ENCODE measurements at regions of chr6 and their contacts with region 1.

Region 1: GRCh38 chr6:31619805-31620585 is 520 bp upstream of the PRRC2A start:
- DNase-seq: peak; percentile 98
- H3K4me3 Mint-ChIP-seq: peak overlapping the region; percentile 79
- H3K27ac Mint-ChIP-seq: peak overlapping the region; percentile 98
- H3K4me1 Mint-ChIP-seq: peaks cover 43% of the 10 kb centered on the region
- H3K27me3 Mint-ChIP-seq: no peaks in the 10 kb centered on the region

Region 2: DNA sequence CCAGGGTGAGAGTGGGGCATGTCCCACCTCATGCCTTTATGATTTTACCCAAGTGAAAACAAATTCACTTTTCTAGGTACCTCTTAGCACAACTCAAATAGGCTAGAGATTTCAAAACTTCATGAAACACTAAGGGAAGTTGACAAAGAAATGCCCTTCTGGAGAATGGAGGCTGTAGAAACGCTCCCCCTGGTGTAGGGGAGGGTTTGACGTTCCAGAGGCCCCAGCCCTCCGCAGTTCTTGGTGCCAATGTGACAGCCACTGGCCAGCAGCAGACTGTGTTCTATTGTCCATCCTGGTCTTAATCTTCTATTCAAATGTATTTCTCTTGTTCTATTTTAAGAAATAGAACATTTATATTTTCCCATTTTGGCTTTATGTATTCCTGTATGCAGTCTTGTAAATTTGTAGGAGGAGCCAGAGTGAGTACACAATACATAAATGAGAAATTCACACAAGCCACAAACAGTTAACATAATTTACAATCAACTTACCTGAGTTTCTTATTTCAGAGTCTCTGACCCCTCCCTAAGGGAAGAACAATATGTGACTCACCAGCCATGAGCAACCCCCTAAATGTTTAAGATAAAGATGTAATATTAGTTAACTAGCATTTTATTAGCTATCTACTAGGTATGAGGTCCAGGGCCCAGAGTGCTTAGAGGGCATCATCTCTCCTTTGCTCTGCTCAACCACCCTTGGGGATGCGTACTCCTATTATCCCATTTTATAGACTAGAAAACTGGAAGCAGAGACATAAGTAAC is 645.3 kb before region 1 on chr6:
- intact Hi-C with region 1: no loop called
- DNase-seq: no peak
- H3K4me3 Mint-ChIP-seq: no peak overlapping the region
- H3K27ac Mint-ChIP-seq: no peak overlapping the region
- H3K4me1 Mint-ChIP-seq: no peaks in the 10 kb centered on the region
- H3K27me3 Mint-ChIP-seq: peaks cover 34% of the 10 kb centered on the region

Region 3: DNA sequence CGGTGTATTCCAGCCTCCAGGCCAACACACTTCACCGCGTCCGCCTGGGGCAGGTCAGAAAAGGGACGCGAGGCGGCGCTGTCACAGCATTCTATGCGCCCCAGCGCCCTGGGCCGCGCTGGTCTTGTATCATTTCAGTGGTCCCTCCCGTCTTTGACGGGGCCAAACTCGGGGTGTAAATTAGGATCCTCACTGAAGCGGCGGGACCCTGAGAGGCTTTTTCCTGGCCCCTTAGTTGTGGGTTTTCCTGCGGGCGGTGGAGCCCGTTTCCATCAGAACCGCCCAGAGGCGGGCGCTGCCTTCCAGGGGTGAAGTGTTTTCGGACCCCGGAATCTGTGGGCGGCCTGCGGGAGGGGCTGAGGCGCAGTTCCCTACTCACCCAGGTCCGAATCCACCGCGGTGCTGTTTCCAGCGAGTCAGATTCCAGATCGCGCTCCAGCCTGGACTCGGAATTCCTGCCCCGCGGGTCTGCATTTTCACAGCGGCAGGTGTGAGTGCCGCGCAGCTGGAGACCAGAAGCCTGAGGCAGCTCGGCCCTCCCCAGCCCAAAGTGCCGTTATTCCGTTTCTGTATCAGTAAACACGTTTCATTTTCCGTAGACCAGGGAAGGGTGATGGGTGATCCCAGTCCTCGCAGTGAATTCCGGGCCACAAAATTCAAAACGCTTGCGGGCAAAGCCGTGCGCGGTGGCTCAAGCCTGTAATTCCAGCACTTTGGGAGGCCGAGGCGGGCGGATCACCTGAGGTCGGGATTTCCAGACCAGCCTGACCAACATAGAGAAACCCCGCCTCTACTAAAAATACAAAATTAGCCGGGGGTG is 125.9 kb before region 1 on chr6:
- intact Hi-C with region 1: loop called (anchors 2 kb)
- DNase-seq: peak; percentile 69
- H3K4me3 Mint-ChIP-seq: peak overlapping the region; percentile 89
- H3K27ac Mint-ChIP-seq: peak overlapping the region; percentile 85
- H3K4me1 Mint-ChIP-seq: peaks cover 46% of the 10 kb centered on the region
- H3K27me3 Mint-ChIP-seq: no peaks in the 10 kb centered on the region

Region 4: DNA sequence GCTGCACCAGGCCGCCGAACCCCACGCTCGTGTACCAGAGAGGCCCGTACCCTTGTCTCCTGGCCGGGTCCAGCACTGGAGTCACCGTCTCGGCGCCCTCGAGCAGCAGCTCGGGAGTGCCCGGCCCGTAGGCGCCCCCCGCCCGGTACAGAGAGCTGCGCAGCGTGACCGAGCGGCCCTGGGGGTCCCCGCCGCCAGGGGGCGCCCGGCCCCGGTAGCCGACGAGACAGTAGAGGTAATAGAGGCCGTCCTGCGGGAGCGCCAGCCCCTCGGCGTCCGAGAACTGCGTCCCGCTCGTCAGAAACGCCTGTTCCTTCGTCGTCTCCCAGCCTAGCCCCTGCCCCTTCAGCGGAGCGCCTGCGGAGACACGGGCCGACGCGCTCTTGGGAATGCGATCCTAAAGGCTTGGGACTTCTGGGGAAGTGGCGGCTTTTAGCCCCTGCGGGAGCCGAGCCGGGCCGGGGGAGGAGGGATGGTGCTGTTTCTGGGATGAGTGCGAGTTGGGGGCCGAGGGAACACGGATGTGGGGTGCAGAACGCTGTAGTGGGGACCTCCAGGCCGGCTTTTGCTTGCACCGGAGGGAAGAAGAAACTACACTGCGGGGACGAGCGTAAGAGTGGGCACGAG is 39.1 kb before region 1 on chr6:
- intact Hi-C with region 1: loop called (anchors 1 kb)
- DNase-seq: peak; percentile 81
- H3K4me3 Mint-ChIP-seq: peak overlapping the region; percentile 92
- H3K27ac Mint-ChIP-seq: peak overlapping the region; percentile 93
- H3K4me1 Mint-ChIP-seq: peaks cover 63% of the 10 kb centered on the region
- H3K27me3 Mint-ChIP-seq: no peaks in the 10 kb centered on the region

Region 5: DNA sequence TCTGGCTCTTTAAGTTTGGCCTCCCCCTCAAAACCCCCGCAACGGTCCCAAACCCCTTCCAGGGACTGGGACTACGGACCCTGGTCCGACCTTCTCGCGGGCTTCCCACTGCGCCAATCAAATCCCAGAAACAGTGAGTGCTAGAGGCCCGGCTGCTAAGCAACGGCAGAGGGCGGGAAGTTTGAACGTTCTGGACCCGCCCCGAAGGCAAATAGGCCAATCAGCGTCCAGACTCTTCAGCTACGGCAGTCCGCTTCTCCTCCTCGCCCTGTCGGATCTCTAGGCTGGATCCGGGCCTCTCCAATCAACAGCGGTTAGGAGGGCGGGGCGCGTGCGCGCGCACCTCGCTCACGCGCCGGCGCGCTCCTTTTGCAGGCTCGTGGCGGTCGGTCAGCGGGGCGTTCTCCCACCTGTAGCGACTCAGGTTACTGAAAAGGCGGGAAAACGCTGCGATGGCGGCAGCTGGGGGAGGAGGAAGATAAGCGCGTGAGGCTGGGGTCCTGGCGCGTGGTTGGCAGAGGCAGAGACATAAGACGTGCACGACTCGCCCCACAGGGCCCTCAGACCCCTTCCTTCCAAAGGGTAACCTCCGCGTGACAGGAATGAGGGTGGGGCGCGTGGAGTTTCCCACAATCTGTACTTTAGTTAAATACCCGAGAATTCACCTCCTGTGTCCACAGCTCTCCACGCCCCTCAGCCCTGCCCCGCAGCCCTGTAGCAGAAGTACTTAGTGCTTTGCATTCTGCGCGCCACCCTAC is 119.8 kb after region 1 on chr6 and contains the start of gene MSH5:
- intact Hi-C with region 1: loop called (anchors 1 kb)
- DNase-seq: peak; percentile 97
- H3K4me3 Mint-ChIP-seq: peak within 1 kb of the TSS; percentile 98
- H3K27ac Mint-ChIP-seq: peak within 1 kb of the TSS; percentile 99
- H3K4me1 Mint-ChIP-seq: peaks cover 64% of the 10 kb centered on the region
- H3K27me3 Mint-ChIP-seq: peaks cover 3% of the 10 kb centered on the region
- total RNA-seq, gene MSH5: 80.5 and 83.4 TPM in 2 replicates

Region 6: GRCh38 chr6:31862344-31863227 is 242.6 kb after region 1 on chr6 and contains the start of gene NEU1:
- intact Hi-C with region 1: loop called (anchors 2 kb)
- DNase-seq: peak; percentile 99
- H3K4me3 Mint-ChIP-seq: peak within 1 kb of the TSS; percentile 97
- H3K27ac Mint-ChIP-seq: peak within 1 kb of the TSS; percentile 94
- H3K4me1 Mint-ChIP-seq: peaks cover 37% of the 10 kb centered on the region
- H3K27me3 Mint-ChIP-seq: peaks cover 3% of the 10 kb centered on the region
- total RNA-seq, gene NEU1: 22.1 and 24.3 TPM in 2 replicates

Region 7: DNA sequence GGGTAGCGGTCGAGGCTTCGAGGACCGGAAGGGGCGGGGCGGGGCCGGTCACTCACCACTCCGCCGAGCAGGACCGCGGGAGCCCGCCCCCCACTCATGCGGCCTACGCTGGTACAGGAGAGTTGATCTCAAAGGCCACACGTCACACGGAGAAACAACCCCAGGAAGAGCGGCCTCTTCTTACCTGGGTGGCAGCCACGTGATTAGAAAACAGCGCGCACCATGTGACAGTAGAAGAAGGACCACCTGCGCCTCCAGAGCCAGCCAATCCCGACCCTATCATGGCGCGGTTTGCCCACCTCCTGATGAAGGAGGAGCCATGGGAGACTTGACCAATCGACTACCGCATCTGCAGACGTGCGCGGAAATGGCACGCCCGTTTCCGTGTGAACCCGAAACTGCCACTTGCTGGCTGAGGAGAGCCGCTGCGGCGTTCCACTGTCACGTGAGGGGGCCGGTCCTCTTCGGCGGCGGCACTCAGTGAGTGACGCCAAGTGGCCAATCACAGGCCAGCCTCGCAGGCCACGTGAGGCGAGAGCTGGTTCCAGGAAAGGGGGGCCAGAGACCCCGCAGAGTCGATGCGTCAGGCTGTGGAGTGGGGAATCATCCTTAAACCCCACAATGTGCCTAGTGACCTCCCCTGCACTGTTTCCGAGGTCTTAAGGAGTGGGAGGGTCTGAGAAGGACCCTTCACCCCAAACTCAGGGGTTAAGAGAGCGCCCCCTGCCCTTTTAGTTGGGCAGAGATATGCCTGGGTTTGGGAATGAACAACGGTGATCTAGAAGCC is 1798.1 kb after region 1 on chr6 and contains the start of gene CUTA:
- intact Hi-C with region 1: loop called (anchors 2 kb)
- DNase-seq: peak; percentile 98
- H3K4me3 Mint-ChIP-seq: peak within 1 kb of the TSS; percentile 95
- H3K27ac Mint-ChIP-seq: peak within 1 kb of the TSS; percentile 96
- H3K4me1 Mint-ChIP-seq: peaks cover 70% of the 10 kb centered on the region
- H3K27me3 Mint-ChIP-seq: no peaks in the 10 kb centered on the region
- total RNA-seq, gene CUTA: 131 and 137 TPM in 2 replicates

Measured in activated T-helper 1 cell treated with anti-CD3 and anti-CD28 coated beads, Interleukin-12 subunit alpha, Interleukin-12 subunit beta, Interleukin-2, Interleukin-4 antibody, amounts not matched to agents 30 ng/mL and 10 ng/mL and 1 ng/mL, durations not matched to agents 14 hours and 24 hours and 36 hours (primary cell).